Caco-2 (cell line): ENCODE measurements at regions of chr17 and their contacts with region 1.

Region 1: DNA sequence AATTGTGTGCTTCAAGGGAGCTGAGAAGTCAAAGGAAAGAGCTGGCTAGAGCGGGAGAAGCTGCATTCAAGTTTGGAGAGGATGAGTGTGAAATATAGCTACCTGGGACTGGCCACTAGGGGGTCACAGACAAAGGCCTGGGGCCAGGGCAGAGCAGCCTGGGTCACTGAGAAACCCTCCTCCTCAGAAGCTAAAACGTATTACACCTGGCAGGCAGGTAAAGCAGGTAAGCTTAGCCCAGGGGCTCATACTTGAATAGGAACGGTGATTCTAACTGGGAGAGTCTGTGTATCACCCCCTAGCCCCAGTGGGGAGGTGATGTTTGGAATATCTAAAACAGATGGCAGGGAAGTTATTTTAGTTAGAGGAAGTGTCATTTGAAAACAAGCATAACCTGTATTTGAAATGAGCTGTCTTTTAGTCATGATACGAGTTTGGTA is 6.8 kb downstream of the KRT37 start:
- DNase-seq: peak; percentile 63 to 65
- H3K4me3 ChIP-seq: no peak overlapping the region
- H3K4me3 Mint-ChIP-seq: no peak overlapping the region
- H3K27ac Mint-ChIP-seq: peak overlapping the region; percentile 5
- H3K4me1 ChIP-seq: peaks cover 60% of the 10 kb centered on the region
- H3K4me1 Mint-ChIP-seq: peaks cover 70% of the 10 kb centered on the region
- H3K27me3 ChIP-seq: no peaks in the 10 kb centered on the region
- H3K27me3 Mint-ChIP-seq: no peaks in the 10 kb centered on the region
- CTCF ChIP-seq: peak; percentile 70 to 71

Region 2: DNA sequence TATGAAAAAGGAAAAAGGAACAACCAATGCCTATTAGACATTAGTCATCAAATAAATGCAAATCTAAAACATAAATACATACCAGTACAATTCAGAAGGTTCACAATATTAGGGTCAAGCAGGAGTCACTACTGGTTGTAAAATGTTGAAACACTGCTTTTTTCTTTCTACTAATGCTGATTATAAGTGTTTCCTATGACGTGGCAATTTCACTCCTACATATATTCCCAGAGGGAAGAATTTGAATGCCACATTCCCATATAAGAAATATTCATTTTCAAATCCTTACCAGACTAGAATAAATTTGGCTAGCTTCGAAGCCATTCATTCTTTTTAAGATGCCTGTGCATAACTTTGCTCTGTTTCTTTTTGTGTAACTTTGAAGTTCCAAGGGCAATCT is 193.8 kb before region 1 on chr17:
- CTCF ChIA-PET with region 1: no interaction called
- POLR2A ChIA-PET with region 1: no interaction called
- intact Hi-C with region 1: no loop called
- DNase-seq: no peak
- H3K4me3 ChIP-seq: no peak overlapping the region
- H3K4me3 Mint-ChIP-seq: no peak overlapping the region
- H3K27ac Mint-ChIP-seq: no peak overlapping the region
- H3K4me1 ChIP-seq: no peaks in the 10 kb centered on the region
- H3K4me1 Mint-ChIP-seq: no peaks in the 10 kb centered on the region
- H3K27me3 ChIP-seq: no peaks in the 10 kb centered on the region
- H3K27me3 Mint-ChIP-seq: no peaks in the 10 kb centered on the region
- CTCF ChIP-seq: no peak

Region 3: DNA sequence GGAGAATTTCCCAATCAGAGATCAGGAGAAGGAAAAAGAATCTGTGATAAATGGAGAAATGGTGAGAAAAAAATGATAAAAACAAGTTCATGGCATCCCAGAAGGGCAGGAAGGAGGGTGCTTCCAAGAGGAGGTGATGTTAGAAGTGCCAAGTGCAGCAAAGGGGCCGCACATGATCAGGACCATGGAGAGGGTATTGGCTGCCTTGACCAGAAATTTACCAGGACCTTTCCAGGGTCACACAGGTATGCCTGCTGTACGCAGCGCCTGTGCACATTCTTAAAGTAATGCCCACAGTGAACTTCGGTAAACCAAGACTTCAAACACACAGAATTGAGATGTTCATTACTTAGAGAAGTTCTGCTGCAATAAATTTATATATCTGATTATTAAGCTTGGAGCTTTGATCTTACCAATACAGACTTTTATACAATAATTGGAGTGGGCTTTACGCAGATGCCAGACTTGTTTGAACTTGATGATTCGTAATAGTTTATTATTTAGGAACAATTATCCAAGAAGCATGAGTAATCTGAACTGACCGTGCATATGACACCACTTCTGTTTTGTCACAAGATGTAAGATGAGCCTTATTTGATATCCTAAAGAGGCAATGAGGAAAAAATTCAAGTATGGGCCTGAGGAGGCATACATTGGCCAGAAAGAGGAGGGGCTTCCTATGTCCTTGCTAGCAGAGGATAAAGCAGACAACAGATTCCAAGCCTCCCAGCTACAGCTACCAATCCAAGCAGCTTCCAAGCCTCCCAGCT is 64.8 kb before region 1 on chr17:
- CTCF ChIA-PET with region 1: interaction called, 4 read pairs
- POLR2A ChIA-PET with region 1: no interaction called
- intact Hi-C with region 1: loop called (anchors 10 kb)
- DNase-seq: peak in 1 of 2 experiments; percentile 31
- H3K4me3 ChIP-seq: no peak overlapping the region
- H3K4me3 Mint-ChIP-seq: no peak overlapping the region
- H3K27ac Mint-ChIP-seq: no peak overlapping the region
- H3K4me1 ChIP-seq: no peaks in the 10 kb centered on the region
- H3K4me1 Mint-ChIP-seq: no peaks in the 10 kb centered on the region
- H3K27me3 ChIP-seq: no peaks in the 10 kb centered on the region
- H3K27me3 Mint-ChIP-seq: no peaks in the 10 kb centered on the region
- CTCF ChIP-seq: no peak

Region 4: DNA sequence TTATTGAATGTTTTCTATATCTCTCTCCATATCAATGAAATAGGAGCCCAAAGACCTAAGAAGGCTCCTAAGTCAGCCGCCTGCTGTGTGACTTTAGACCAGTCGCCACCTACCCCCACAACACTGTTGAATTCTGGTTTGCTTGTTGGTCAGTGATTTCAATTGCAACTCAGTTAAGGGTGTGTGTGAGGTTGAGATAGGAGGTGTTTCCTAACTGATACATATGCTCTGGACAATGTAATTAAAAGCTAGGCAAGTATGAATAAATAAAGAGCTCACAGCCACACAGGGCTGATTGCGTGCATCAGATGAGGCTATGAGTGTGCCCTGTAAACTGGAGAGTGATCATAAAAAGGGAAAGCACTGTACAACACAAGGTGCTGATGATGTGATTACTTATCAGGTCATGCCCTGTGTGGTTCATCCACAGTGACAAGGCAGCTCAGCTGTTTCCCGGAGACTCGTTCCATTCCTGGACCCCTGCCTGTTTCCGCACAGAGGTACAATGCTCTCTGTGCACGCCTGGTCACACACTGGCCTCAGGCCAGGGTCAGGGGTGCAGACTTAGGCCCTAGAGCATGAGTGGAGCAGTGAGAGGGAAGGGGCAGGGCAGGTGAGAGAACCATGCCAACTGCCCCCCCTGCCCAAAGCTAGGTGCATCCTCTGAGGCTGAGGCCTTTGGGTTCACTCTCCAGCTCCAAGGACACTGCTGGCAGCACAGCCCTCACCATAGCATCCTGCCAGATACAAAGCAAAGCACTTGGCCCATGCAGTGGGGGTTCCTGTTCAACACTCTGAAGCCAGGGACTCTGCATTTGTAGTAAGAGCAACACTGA is 66.6 kb after region 1 on chr17:
- CTCF ChIA-PET with region 1: interaction called, 4 read pairs
- POLR2A ChIA-PET with region 1: no interaction called
- intact Hi-C with region 1: loop called (anchors 5 kb)
- DNase-seq: no peak
- H3K4me3 ChIP-seq: no peak overlapping the region
- H3K4me3 Mint-ChIP-seq: no peak overlapping the region
- H3K27ac Mint-ChIP-seq: no peak overlapping the region
- H3K4me1 ChIP-seq: peaks cover 16% of the 10 kb centered on the region
- H3K4me1 Mint-ChIP-seq: peaks cover 11% of the 10 kb centered on the region
- H3K27me3 ChIP-seq: no peaks in the 10 kb centered on the region
- H3K27me3 Mint-ChIP-seq: no peaks in the 10 kb centered on the region
- CTCF ChIP-seq: no peak

Region 5: DNA sequence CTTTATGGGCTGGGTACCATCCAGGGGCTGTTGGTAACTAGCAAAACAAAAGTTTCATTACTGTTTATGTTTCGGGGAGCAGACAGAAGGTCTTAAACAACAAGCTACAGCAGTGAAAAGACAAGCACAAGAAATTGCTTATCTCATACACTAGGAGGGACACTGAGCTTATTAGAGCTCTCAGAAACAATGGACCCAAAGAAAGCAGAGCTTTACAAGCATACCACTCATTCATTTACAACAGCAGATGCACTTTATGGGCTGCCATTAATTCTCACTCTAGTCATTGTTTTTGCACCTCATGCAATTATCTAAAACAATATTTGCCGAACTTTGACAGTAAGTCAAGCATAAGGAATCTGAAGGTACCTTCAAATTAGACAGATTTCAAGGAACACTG is 184.9 kb after region 1 on chr17:
- CTCF ChIA-PET with region 1: no interaction called
- POLR2A ChIA-PET with region 1: no interaction called
- intact Hi-C with region 1: no loop called
- DNase-seq: no peak
- H3K4me3 ChIP-seq: no peak overlapping the region
- H3K4me3 Mint-ChIP-seq: no peak overlapping the region
- H3K27ac Mint-ChIP-seq: no peak overlapping the region
- H3K4me1 ChIP-seq: no peaks in the 10 kb centered on the region
- H3K4me1 Mint-ChIP-seq: peaks cover 8% of the 10 kb centered on the region
- H3K27me3 ChIP-seq: no peaks in the 10 kb centered on the region
- H3K27me3 Mint-ChIP-seq: peaks cover 3% of the 10 kb centered on the region
- CTCF ChIP-seq: no peak